Naive thymus-derived CD4-positive, alpha-beta T cell (primary cell): ENCODE measurements at regions of chr20 and their contacts with region 1.

Region 1: DNA sequence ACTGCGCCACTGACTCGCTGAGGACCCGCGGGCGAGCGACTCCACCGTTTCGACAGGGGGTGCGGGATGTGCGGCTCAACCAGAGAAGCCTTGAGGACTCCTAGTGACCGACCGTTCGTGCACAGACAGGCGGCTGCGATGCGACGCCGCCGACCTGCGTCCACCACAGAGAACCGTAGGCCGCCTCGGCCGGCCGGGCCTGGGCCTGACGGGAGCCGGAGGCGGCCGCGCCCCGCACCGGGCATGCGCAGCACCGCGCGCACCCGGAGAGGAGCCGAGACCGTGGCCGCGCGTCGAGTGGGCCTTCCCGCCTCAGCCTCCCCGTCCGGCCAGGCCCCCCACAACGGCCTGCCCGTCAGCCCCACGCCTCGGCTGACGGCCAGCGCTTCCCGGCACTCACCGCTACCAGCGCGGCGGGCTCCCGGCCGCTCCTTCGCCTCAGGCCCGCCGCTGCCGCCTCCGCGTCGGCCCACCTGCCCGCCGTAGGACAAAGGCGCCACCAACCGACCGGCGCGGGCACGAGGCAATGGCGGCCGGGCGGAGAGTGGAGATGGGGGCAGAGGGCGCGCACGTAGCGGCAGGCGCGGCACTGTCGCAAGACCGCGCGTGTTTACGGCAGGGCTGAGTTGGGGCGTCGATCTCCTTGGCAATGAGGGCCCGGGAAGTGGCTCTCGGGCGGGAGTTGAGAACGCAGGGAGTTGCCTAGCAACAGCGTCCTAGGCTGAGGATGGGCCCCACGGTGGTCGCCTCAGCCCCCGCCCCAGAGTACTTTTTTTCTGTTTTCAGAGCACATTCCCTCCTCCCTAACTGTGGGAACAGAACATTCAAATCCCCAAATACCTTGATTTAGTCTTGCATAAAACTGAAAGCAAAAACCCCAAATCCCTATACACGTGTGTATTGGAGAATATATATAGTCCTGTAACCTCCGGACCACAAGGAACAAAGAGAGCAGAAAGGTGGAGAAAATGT is at the start of gene NCOA5:
- DNase-seq: peak; percentile 90 to 95 (median 94)
- ATAC-seq: peak; percentile 98
- H3K4me3 ChIP-seq: peak within 1 kb of the TSS; percentile 73
- H3K4me3 Mint-ChIP-seq: peak within 1 kb of the TSS; percentile 86 to 95 (median 90)
- H3K27ac ChIP-seq: peak within 1 kb of the TSS; percentile 89
- H3K27ac Mint-ChIP-seq: peak within 1 kb of the TSS; percentile 86 to 95 (median 90)
- H3K4me1 ChIP-seq: peaks cover 24 to 36% of the 10 kb centered on the region in 2 donors
- H3K4me1 Mint-ChIP-seq: peaks cover 29 to 53% (median 51%) of the 10 kb centered on the region in 7 donors
- H3K27me3 ChIP-seq: no peaks in the 10 kb centered on the region
- H3K27me3 Mint-ChIP-seq: no peaks in the 10 kb centered on the region
- total RNA-seq, gene NCOA5: 15.7 to 43.8 (median 39.4) TPM

Region 2: GRCh38 chr20:45368221-45368980 is 721.3 kb before region 1 on chr20:
- CTCF ChIA-PET with region 1: no interaction called
- POLR2A ChIA-PET with region 1: no interaction called
- intact Hi-C with region 1: loop called in 1 of 2 experiments (anchors 2 kb)
- DNase-seq: peak in 7 of 9 donors; percentile 37 to 60 (median 54)
- ATAC-seq: peak; percentile 60
- H3K4me3 ChIP-seq: no peak overlapping the region
- H3K4me3 Mint-ChIP-seq: peak overlapping the region; percentile 27 to 83 (median 60)
- H3K27ac ChIP-seq: peak overlapping the region; percentile 43
- H3K27ac Mint-ChIP-seq: peak overlapping the region; percentile 51 to 90 (median 79)
- H3K4me1 ChIP-seq: peaks cover 47 to 56% of the 10 kb centered on the region in 2 donors
- H3K4me1 Mint-ChIP-seq: peaks cover 47 to 84% (median 77%) of the 10 kb centered on the region in 7 donors
- H3K27me3 ChIP-seq: no peaks in the 10 kb centered on the region
- H3K27me3 Mint-ChIP-seq: no peaks in the 10 kb centered on the region

Region 3: DNA sequence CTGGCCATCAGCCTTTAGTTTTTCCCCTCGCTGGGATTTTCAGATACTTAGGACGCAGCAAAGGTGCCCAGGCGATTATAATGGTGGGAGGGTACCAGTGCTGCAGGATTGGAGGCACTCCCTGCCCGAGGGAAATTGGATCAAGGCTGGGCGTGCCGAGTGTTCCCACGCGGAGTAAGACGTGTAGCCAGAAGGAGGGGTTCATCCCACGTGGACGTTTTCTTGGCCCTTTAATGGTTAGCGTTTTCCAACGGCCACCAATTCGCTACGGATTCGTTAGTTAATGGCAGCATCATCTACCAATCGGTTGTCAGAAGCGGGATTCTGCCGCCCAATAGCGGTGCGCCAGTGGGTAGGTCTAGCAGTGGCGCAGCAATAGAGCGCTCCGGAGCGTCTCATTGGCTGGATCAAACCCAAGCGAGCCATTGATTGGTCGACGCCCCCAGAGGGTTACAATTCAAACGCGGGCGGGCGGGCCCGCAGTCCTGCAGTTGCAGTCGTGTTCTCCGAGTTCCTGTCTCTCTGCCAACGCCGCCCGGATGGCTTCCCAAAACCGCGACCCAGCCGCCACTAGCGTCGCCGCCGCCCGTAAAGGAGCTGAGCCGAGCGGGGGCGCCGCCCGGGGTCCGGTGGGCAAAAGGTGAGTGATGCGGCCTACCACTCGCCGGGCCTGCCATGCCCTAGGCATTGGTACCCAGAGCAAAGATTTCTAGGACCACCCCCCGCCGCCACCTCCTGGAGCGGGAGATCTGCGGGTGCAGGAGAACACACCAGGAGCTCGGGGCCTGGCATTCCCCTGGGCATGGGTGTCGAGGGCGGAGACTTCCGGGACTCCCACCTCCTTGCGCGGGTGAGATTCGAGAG is 277.3 kb before region 1 on chr20 and contains the start of gene UBE2C:
- CTCF ChIA-PET with region 1: no interaction called
- POLR2A ChIA-PET with region 1: no interaction called
- intact Hi-C with region 1: loop called in 1 of 2 experiments (anchors 5 kb)
- DNase-seq: peak; percentile 73 to 95 (median 92)
- ATAC-seq: peak; percentile 100
- H3K4me3 ChIP-seq: peak within 1 kb of the TSS; percentile 52
- H3K4me3 Mint-ChIP-seq: peak within 1 kb of the TSS; percentile 79 to 96 (median 84)
- H3K27ac ChIP-seq: peak within 1 kb of the TSS; percentile 63
- H3K27ac Mint-ChIP-seq: peak within 1 kb of the TSS; percentile 36 to 87 (median 71)
- H3K4me1 ChIP-seq: peaks cover 0 to 12% of the 10 kb centered on the region in 2 donors
- H3K4me1 Mint-ChIP-seq: peaks cover 3 to 42% (median 16%) of the 10 kb centered on the region in 7 donors
- H3K27me3 ChIP-seq: no peaks in the 10 kb centered on the region
- H3K27me3 Mint-ChIP-seq: no peaks in the 10 kb centered on the region
- total RNA-seq, gene UBE2C: 0.50 to 129 (median 0.75) TPM in 4 of 5 experiments, not detected in the other

Region 4: DNA sequence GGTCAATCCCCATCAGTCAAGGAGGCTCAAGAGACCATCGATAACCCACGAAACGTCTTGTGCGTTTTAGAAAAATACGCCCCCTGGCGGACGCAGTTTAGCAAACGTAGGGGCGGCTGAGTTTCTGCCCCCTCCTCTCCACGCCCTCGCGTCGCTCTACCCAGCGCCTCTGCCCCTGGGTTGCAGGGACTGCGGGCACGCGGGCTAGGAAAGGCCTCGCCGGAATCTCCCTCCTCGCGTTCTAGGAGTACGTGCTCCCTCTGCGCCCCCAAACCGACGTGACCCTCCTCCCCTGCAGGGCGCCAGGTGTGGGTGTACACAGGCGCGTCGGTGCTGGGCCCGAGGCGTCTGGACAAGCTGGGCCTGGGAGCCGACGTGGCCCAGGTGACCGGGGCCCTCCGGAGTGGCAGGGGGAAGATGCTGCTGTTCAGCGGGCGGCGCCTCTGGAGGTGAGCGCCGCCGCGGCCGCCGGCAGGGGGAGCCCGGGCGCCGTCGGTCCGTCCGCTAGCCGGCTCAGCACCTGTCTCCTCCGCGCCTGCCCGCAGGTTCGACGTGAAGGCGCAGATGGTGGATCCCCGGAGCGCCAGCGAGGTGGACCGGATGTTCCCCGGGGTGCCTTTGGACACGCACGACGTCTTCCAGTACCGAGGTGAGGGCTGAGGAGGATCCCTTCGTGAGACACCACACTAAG is 75.7 kb before region 1 on chr20:
- CTCF ChIA-PET with region 1: interaction called, 3 read pairs
- POLR2A ChIA-PET with region 1: no interaction called
- intact Hi-C with region 1: loop called in 1 of 2 experiments (anchors 2 kb)
- DNase-seq: peak; percentile 39 to 73 (median 60)
- ATAC-seq: peak; percentile 76
- H3K4me3 ChIP-seq: peak overlapping the region; percentile 32
- H3K4me3 Mint-ChIP-seq: peak overlapping the region; percentile 23 to 76 (median 58)
- H3K27ac ChIP-seq: no peak overlapping the region
- H3K27ac Mint-ChIP-seq: peak overlapping the region in 3 of 9 donors; percentile 1 to 43 (median 29)
- H3K4me1 ChIP-seq: peaks cover 24 to 27% of the 10 kb centered on the region in 2 donors
- H3K4me1 Mint-ChIP-seq: peaks cover 38 to 61% (median 48%) of the 10 kb centered on the region in 7 donors
- H3K27me3 ChIP-seq: peaks cover 15 to 16% of the 10 kb centered on the region in 2 donors
- H3K27me3 Mint-ChIP-seq: peaks cover 52 to 68% (median 55%) of the 10 kb centered on the region in 5 donors

Region 5: GRCh38 chr20:46117704-46118467 is 28.2 kb after region 1 on chr20 and contains the start of gene CD40:
- CTCF ChIA-PET with region 1: no interaction called
- POLR2A ChIA-PET with region 1: interaction called, 4 read pairs
- intact Hi-C with region 1: loop called in 1 of 2 experiments (anchors 1 kb)
- DNase-seq: peak; percentile 61 to 75 (median 66)
- ATAC-seq: peak; percentile 96
- H3K4me3 ChIP-seq: peak within 1 kb of the TSS; percentile 72
- H3K4me3 Mint-ChIP-seq: peak within 1 kb of the TSS; percentile 89 to 96 (median 92)
- H3K27ac ChIP-seq: peak within 1 kb of the TSS; percentile 56
- H3K27ac Mint-ChIP-seq: peak within 1 kb of the TSS in 7 of 9 donors; percentile 12 to 89 (median 77)
- H3K4me1 ChIP-seq: peaks cover 0 to 5% of the 10 kb centered on the region in 2 donors
- H3K4me1 Mint-ChIP-seq: peaks cover 12 to 35% (median 23%) of the 10 kb centered on the region in 7 donors
- H3K27me3 ChIP-seq: no peaks in the 10 kb centered on the region
- H3K27me3 Mint-ChIP-seq: peaks cover 0 to 29% (median 9%) of the 10 kb centered on the region in 5 donors
- total RNA-seq, gene CD40: 1.7 to 10.0 (median 4.0) TPM

Region 6: GRCh38 chr20:46689082-46689754 is 599.5 kb after region 1 on chr20 and contains the start of gene TP53RK:
- CTCF ChIA-PET with region 1: no interaction called
- POLR2A ChIA-PET with region 1: no interaction called
- intact Hi-C with region 1: loop called in 1 of 2 experiments (anchors 10 kb)
- DNase-seq: peak; percentile 85 to 98 (median 96)
- ATAC-seq: peak; percentile 97
- H3K4me3 ChIP-seq: peak within 1 kb of the TSS; percentile 84
- H3K4me3 Mint-ChIP-seq: peak within 1 kb of the TSS; percentile 90 to 100 (median 96)
- H3K27ac ChIP-seq: peak within 1 kb of the TSS; percentile 90
- H3K27ac Mint-ChIP-seq: peak within 1 kb of the TSS; percentile 91 to 97 (median 95)
- H3K4me1 ChIP-seq: peaks cover 20 to 30% of the 10 kb centered on the region in 2 donors
- H3K4me1 Mint-ChIP-seq: peaks cover 38 to 54% (median 45%) of the 10 kb centered on the region in 7 donors
- H3K27me3 ChIP-seq: no peaks in the 10 kb centered on the region
- H3K27me3 Mint-ChIP-seq: no peaks in the 10 kb centered on the region
- total RNA-seq, gene TP53RK: 4.4 to 27.7 (median 17.7) TPM